Sigmoid colon (tissue), 7 donors: ENCODE measurements at regions of chr6 and their contacts with region 1.

Region 1: GRCh38 chr6:127459231-127459641 is at the start of gene KIAA0408:
- DNase-seq: peak; percentile 95
- H3K4me3 ChIP-seq: peak within 1 kb of the TSS; percentile 51 to 58 (median 56)
- H3K27ac ChIP-seq: peak within 1 kb of the TSS; percentile 83 to 91 (median 86)
- H3K4me1 ChIP-seq: peaks cover 0 to 74% (median 45%) of the 10 kb centered on the region in 4 donors
- H3K27me3 ChIP-seq: no peaks in the 10 kb centered on the region
- CTCF ChIP-seq: no peak
- EP300 ChIP-seq: peak; percentile 18 to 83 (median 73)
- POLR2A ChIP-seq: no peak
- total RNA-seq, gene KIAA0408: 27.3 to 103 (median 58.5) TPM

Region 2: DNA sequence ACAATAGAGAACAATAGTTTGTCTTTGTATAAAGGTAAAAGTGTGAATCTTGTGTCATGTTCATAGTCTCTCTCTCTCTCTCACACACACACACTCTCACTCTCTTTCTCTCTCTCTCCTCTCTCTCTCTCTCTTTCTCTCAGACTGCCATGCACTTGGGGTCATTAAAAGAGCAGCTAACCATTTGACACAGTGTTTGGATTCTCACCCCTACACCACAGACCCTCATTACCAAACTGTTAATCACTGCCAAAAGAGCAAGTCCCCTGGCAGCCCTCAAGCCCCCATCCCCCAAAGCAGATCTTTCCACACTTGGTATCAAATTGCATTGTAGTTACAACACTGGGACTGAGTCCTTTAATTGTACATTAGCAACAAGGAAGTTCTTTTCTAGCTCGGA is 646.6 kb before region 1 on chr6:
- intact Hi-C with region 1: no loop called
- DNase-seq: no peak
- H3K4me3 ChIP-seq: no peak overlapping the region
- H3K27ac ChIP-seq: no peak overlapping the region
- H3K4me1 ChIP-seq: peaks cover 0 to 21% (median 16%) of the 10 kb centered on the region in 4 donors
- H3K27me3 ChIP-seq: no peaks in the 10 kb centered on the region
- CTCF ChIP-seq: no peak
- EP300 ChIP-seq: no peak
- POLR2A ChIP-seq: no peak

Region 3: DNA sequence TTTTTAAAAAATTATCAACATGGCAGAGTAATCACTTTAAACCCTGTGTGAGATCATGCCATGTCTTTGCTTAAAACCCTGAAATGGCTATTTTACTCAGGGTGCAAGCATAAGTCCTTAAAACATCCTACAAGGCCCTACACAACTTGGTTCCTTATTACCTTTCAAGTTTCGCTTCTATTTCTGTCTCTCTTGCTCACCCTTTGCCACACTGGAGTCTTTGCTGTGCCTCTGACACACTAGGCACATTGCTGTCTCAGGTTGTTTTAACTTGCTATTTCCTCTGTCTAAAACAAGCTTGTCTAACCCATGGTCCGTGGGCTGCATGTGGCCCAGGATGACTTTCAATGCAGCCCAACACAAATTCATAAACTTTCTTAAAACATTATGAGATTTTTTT is 55.6 kb before region 1 on chr6:
- intact Hi-C with region 1: no loop called
- DNase-seq: no peak
- H3K4me3 ChIP-seq: no peak overlapping the region
- H3K27ac ChIP-seq: no peak overlapping the region
- H3K4me1 ChIP-seq: no peaks in the 10 kb centered on the region
- H3K27me3 ChIP-seq: no peaks in the 10 kb centered on the region
- CTCF ChIP-seq: no peak
- EP300 ChIP-seq: no peak
- POLR2A ChIP-seq: no peak

Region 4: DNA sequence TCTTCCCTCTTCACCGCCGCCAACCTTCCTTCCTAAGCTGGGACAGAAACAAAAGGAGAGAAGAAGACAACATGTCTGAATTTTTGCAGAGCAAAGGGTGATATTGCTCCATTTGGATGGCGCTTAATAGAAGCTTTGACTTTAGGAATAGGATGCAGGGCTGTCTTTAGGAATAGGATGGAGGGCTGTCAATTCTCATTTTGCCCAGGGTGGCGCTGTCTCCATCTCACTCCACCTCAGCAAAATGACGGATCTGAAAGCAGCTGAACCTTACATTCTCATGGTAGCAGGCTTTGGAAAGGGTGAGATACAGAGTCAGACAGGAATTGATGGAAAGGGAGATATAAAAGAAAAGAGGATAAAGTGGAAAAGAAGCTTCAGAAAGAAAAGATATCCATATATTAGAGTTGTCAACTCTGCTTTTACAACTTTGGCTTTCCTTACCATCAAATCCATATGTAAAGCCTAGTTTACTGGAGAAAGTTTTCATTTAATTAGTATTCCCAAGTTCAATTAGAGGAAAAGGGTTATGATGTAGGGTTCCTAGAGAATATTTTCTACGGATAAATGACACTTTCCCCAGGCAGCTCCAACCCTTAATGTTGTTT is 57.5 kb after region 1 on chr6:
- intact Hi-C with region 1: loop called (anchors 2 kb)
- DNase-seq: no peak
- H3K4me3 ChIP-seq: peak overlapping the region; percentile 68 to 75 (median 72)
- H3K27ac ChIP-seq: no peak overlapping the region
- H3K4me1 ChIP-seq: peaks cover 0 to 36% (median 29%) of the 10 kb centered on the region in 4 donors
- H3K27me3 ChIP-seq: peaks cover 2 to 57% (median 28%) of the 10 kb centered on the region in 3 donors
- CTCF ChIP-seq: peak in 2 of 4 experiments; percentile 14 to 32
- EP300 ChIP-seq: no peak
- POLR2A ChIP-seq: no peak